Left ventricle myocardium inferior (tissue), 1 donor: ENCODE measurements at regions of chr2 and their contacts with region 1.

Region 1: DNA sequence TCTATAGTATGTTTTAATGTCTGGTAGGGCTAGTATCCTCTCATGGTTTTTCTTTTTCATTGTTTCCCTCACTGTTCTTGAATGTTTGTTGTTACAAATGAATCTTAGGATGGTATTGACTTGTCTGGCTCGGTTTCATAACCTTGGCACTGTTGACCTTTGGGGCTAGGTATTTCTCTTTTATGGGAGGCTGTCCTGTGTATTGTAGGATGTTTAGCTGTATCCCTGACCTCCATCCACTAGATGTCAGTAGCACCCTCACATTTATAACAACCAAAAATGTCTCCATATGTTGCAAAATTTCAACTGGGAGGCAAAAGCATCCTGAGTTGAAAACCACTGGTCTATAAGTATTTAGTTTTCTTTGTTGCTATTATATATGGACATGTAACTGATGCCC is 7.0 kb upstream of the AOX1 start:
- DNase-seq: no peak
- H3K4me3 ChIP-seq: no peak overlapping the region
- H3K27ac ChIP-seq: no peak overlapping the region
- H3K4me1 ChIP-seq: no peaks in the 10 kb centered on the region
- H3K27me3 ChIP-seq: no peaks in the 10 kb centered on the region
- CTCF ChIP-seq: peak; percentile 28

Region 2: GRCh38 chr2:200655918-200656580 is 77.3 kb after region 1 on chr2:
- intact Hi-C with region 1: no loop called
- DNase-seq: no peak
- H3K4me3 ChIP-seq: no peak overlapping the region
- H3K27ac ChIP-seq: no peak overlapping the region
- H3K4me1 ChIP-seq: no peaks in the 10 kb centered on the region
- H3K27me3 ChIP-seq: peaks cover 13% of the 10 kb centered on the region
- CTCF ChIP-seq: no peak

Region 3: DNA sequence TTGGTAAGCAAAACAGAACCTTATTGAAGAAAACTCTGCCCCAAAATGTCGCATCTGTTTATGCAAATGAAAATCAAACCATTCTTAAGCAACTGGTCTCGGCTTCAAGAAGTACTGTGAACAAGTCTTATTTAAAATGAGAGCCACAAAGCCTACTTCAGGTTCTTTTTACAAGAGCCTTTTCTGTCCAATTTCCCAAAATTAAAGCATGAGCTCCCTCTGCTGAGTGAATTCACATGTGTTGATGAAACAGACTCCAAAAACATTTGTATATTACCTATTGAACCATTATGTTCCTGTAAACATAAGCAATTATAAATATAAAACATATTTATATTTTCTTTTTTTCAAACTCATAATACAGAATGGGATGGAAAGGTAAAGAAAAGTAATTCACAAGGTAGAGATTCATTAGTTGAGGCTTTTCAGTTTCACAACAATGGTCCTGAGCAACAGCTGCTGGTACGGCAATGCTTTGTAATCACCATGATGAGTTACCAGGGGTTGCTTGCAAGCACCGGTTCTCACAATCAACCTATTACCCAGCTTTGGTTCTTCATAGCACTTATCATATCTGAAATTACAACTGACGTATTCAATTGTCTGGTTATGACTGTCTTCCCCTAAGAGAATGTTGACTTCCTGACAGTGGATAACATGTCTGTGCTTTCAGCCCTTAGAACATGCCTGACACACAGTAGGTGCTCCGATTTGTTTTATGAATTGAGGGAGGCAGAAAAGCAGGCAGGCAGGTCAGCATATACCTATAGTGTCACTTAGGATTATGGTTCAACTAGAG is 124.5 kb after region 1 on chr2:
- intact Hi-C with region 1: loop called (anchors 5 kb)
- DNase-seq: no peak
- H3K4me3 ChIP-seq: no peak overlapping the region
- H3K27ac ChIP-seq: no peak overlapping the region
- H3K4me1 ChIP-seq: peaks cover 8% of the 10 kb centered on the region
- H3K27me3 ChIP-seq: no peaks in the 10 kb centered on the region
- CTCF ChIP-seq: peak; percentile 64

Region 4: GRCh38 chr2:200811336-200812121 is 232.8 kb after region 1 on chr2 and contains the start of gene BZW1:
- intact Hi-C with region 1: no loop called
- DNase-seq: peak; percentile 94
- H3K4me3 ChIP-seq: peak within 1 kb of the TSS; percentile 95
- H3K27ac ChIP-seq: peak within 1 kb of the TSS; percentile 98
- H3K4me1 ChIP-seq: peaks cover 49% of the 10 kb centered on the region
- H3K27me3 ChIP-seq: no peaks in the 10 kb centered on the region
- CTCF ChIP-seq: no peak
- total RNA-seq, gene BZW1: 63.2 TPM